Activated naive CD4-positive, alpha-beta T cell treated with anti-CD3 and anti-CD28 coated beads for 36 hours (primary cell): ENCODE measurements at regions of chr9 and their contacts with region 1.

Region 1: DNA sequence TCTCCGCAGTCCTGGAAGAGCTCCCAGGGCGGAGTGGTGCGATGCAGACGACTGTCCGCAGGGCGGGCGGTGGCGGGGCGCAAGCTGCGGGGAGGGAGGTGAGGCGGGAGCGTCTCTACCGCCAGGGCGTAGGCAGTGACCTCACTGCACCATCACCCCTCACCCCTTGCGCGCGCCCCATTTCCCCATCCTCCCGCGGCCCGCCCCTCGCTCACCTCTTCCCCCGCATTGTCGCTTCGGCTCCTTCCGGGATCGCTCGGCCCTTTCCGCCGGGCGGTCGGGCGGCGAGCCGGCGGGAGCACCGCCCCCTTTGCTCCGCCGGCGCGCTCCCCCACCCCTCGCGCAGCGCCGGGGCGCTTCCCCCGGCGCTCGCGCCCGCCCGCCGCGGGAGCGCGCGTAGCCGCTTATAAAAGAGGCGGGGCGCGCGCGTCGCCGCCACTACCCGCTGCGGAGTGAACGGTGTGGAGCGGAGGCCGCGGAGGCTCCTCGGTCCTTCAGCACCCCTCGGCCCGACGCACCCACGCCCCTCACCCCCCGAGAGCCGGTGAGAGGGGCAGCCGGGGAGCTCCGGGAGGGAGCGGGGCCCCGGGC is at the start of gene SPTAN1:
- DNase-seq: peak; percentile 97
- H3K4me3 Mint-ChIP-seq: peak within 1 kb of the TSS; percentile 85
- H3K27ac Mint-ChIP-seq: peak within 1 kb of the TSS; percentile 84
- H3K4me1 Mint-ChIP-seq: peaks cover 42% of the 10 kb centered on the region
- H3K27me3 Mint-ChIP-seq: no peaks in the 10 kb centered on the region
- total RNA-seq, gene SPTAN1: 162 to 183 TPM

Region 2: DNA sequence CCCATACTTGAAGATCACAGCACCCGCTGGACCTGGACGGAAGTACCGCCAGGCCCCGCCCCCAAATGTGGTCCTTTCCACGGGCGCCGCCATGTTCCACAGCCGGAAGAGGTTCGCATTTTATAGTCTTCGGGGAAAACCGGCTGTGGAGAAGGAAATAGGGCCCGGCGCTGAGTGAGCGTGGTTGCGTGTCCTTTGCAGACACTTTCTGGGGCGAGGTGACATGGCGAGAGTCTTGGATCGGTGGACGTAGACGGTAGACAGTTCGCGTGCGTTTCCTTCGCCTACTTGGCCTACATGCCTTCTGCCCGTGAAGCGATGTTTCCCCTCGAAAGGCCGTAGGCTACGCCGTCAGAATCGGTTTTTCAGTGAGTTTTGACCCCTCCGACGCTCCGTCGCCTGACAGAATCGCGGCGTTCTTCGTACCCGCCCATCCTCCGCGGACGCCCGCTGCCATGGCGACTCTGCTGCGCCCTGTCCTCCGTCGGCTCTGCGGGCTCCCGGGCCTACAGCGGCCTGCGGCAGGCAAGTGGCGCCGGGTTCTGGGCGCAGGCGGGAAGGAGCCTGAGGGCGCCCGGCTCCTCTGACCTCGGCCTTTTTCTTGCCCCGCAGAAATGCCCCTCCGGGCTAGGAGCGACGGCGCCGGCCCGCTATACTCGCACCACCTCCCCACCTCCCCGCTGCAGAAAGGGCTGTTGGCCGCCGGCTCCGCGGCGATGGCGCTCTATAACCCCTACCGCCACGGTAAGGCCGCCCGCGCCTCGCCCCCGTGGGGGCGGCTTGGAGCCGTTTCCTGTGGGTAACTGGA is 229.6 kb before region 1 on chr9 and contains the starts of genes COQ4 and TRUB2:
- CTCF ChIA-PET with region 1: no interaction called
- intact Hi-C with region 1: loop called (anchors 2 kb)
- DNase-seq: peak; percentile 95
- H3K4me3 Mint-ChIP-seq: peak within 1 kb of the TSS; percentile 90
- H3K27ac Mint-ChIP-seq: peak within 1 kb of the TSS; percentile 94
- H3K4me1 Mint-ChIP-seq: peaks cover 22% of the 10 kb centered on the region
- H3K27me3 Mint-ChIP-seq: no peaks in the 10 kb centered on the region
- total RNA-seq, gene COQ4: 27.8 to 29.6 TPM
- total RNA-seq, gene TRUB2: 28.0 to 29.4 TPM

Region 3: GRCh38 chr9:128504485-128505413 is 47.5 kb before region 1 on chr9 and contains the start of gene GLE1:
- CTCF ChIA-PET with region 1: interaction called, 4 read pairs
- intact Hi-C with region 1: loop called (anchors 1 kb)
- DNase-seq: peak; percentile 96
- H3K4me3 Mint-ChIP-seq: peak within 1 kb of the TSS; percentile 92
- H3K27ac Mint-ChIP-seq: peak within 1 kb of the TSS; percentile 91
- H3K4me1 Mint-ChIP-seq: peaks cover 26% of the 10 kb centered on the region
- H3K27me3 Mint-ChIP-seq: no peaks in the 10 kb centered on the region
- total RNA-seq, gene GLE1: 48.7 to 51.6 TPM

Region 4: DNA sequence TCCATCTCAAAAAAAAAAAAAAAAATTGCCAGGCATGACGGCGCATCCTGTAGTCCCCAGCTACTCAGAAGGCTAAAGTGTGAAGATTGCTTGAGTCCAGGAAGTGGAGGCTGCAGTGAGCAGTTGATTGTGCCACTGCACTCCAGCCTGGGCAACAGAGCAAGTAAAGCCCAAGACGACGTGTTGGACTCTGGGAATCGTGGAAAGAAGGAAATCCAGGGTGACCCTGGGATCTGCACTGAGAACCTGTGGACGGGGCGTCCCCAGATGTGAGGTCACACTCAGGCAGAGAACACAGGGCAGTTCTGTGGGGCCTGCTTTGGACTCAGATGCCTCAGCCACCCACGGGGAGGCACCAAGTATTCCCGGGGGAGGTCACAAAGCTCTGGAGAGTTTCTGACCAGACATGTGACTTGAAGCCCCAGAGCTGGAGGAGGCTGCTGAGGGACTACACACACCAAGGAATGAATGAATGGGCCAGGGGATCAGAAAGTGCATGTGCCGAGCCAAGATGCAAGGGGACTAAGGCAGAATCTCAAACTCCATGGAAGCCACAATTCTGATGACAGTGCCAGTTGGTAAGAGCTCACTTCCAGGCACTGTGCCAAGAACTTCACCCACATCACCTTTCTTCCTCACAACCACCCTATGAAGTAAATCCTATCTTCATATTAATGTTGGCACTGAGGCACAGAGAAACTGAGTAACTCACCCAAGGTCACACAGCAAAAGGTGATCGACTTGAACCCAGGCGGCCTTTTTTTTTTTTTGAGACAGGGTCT is 91.5 kb after region 1 on chr9:
- CTCF ChIA-PET with region 1: no interaction called
- intact Hi-C with region 1: no loop called
- DNase-seq: no peak
- H3K4me3 Mint-ChIP-seq: no peak overlapping the region
- H3K27ac Mint-ChIP-seq: no peak overlapping the region
- H3K4me1 Mint-ChIP-seq: no peaks in the 10 kb centered on the region
- H3K27me3 Mint-ChIP-seq: no peaks in the 10 kb centered on the region

Region 5: GRCh38 chr9:128771745-128772519 is 219.7 kb after region 1 on chr9 and contains the start of gene ZER1:
- CTCF ChIA-PET with region 1: no interaction called
- intact Hi-C with region 1: loop called (anchors 1 kb)
- DNase-seq: peak; percentile 95
- H3K4me3 Mint-ChIP-seq: peak within 1 kb of the TSS; percentile 95
- H3K27ac Mint-ChIP-seq: peak within 1 kb of the TSS; percentile 90
- H3K4me1 Mint-ChIP-seq: peaks cover 24% of the 10 kb centered on the region
- H3K27me3 Mint-ChIP-seq: no peaks in the 10 kb centered on the region
- total RNA-seq, gene ZER1: 9.9 to 11.0 TPM

Region 6: DNA sequence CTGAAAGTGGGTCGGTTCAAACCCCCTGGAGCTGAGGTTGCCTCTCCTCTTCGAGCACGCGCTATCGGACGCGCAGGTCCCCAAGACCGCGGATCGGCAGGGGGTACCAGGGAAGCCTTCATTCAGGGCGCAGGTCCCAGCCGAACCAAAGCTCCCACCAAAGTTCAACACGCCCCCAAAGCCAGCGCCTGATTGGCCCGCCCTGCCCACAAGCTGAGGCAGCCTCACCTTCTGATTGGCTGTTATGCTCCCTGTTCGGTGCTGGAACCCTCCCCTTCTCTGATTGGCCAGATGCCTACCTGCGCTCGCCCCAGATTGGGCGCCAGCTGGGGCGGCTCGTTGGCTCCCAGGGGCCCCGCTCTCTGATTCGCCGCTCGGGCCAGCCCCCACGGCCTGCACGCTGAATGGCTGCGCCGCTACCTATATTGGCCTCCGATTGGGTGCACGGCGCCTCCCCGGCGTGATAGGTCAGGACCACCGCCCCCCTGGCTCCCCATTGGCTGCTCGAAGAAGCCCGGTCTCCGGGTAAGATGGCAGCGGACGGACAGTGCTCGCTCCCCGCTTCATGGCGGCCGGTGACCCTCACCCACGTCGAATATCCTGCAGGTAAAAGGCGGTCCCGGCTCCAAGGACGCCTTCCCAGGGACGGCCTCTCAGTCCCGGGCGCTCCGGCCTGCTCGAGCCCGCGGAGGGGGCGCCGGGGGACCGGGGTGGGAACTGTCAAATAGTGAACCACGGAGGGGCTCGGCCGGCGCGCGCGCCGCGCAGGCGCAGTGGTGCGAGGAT is 528.5 kb after region 1 on chr9 and contains the start of gene DOLPP1:
- CTCF ChIA-PET with region 1: no interaction called
- intact Hi-C with region 1: loop called (anchors 2 kb)
- DNase-seq: peak; percentile 99
- H3K4me3 Mint-ChIP-seq: peak within 1 kb of the TSS; percentile 83
- H3K27ac Mint-ChIP-seq: peak within 1 kb of the TSS; percentile 46
- H3K4me1 Mint-ChIP-seq: peaks cover 27% of the 10 kb centered on the region
- H3K27me3 Mint-ChIP-seq: no peaks in the 10 kb centered on the region
- total RNA-seq, gene DOLPP1: 15.5 to 19.9 TPM